ENCODE measurements at regions of chr18 and their contacts with region 1.

Region 1: DNA sequence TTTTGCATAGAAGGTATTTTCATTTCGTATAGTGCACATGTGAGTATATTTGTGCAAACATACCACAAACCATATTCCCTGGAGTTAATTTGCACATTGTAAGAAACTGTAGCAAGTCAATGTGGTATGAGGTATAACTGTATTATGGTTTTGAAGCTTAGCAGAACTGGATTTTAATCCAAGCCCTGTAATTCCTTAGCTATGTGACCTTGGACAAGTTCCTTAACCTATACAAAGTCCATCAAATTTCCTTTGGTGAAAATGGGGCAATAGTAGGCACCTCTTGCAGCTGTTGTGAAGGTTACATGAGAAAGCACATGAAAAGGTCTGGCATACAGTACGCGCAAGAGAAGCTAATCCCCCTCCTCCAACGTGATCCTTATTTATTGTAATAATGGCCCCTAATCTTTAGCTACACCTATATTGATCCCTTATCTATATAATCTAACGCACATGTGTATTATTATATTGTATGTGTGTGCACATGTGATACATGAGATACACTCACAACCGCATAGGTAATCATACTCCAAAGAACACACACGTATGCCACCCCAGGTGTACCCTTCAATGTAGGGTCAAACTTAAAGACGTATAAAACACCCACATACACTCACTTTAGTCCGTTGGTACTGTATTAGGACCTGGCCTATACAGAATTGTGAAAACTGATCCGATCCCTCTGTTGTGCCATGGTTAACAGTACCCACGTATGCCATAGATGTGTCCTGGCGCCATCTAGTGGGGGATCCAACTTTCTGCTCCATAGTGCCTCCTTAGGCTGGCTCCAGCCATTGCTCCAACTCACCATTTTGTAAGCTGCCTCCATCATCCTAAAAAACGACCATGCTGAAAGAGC is 402.9 kb upstream of the SLC14A2 start:
- DNase-seq: peak; percentile 89
- H3K4me3 Mint-ChIP-seq: no peak overlapping the region
- H3K27ac Mint-ChIP-seq: no peak overlapping the region
- H3K4me1 Mint-ChIP-seq: no peaks in the 10 kb centered on the region
- H3K27me3 Mint-ChIP-seq: no peaks in the 10 kb centered on the region
- CTCF ChIP-seq: peak; percentile 99

Region 2: GRCh38 chr18:43620936-43621335 is 1591.5 kb before region 1 on chr18:
- CTCF ChIA-PET with region 1: interaction called, 6 read pairs
- POLR2A ChIA-PET with region 1: no interaction called
- intact Hi-C with region 1: loop called (anchors 5 kb)
- DNase-seq: peak; percentile 54
- H3K4me3 Mint-ChIP-seq: no peak overlapping the region
- H3K27ac Mint-ChIP-seq: no peak overlapping the region
- H3K4me1 Mint-ChIP-seq: no peaks in the 10 kb centered on the region
- H3K27me3 Mint-ChIP-seq: peaks cover 34% of the 10 kb centered on the region
- CTCF ChIP-seq: peak; percentile 47

Region 3: GRCh38 chr18:44579028-44579702 is 633.2 kb before region 1 on chr18:
- CTCF ChIA-PET with region 1: interaction called, 3 read pairs
- POLR2A ChIA-PET with region 1: no interaction called
- intact Hi-C with region 1: loop called (anchors 1 kb)
- DNase-seq: peak; percentile 53
- H3K4me3 Mint-ChIP-seq: no peak overlapping the region
- H3K27ac Mint-ChIP-seq: no peak overlapping the region
- H3K4me1 Mint-ChIP-seq: peaks cover 13% of the 10 kb centered on the region
- H3K27me3 Mint-ChIP-seq: no peaks in the 10 kb centered on the region
- CTCF ChIP-seq: peak; percentile 59

Region 4: GRCh38 chr18:44838971-44839666 is 373.3 kb before region 1 on chr18:
- CTCF ChIA-PET with region 1: interaction called, 10 read pairs
- POLR2A ChIA-PET with region 1: no interaction called
- intact Hi-C with region 1: no loop called
- DNase-seq: peak; percentile 86
- H3K4me3 Mint-ChIP-seq: peak overlapping the region; percentile 17
- H3K27ac Mint-ChIP-seq: peak overlapping the region; percentile 75
- H3K4me1 Mint-ChIP-seq: peaks cover 17% of the 10 kb centered on the region
- H3K27me3 Mint-ChIP-seq: no peaks in the 10 kb centered on the region
- CTCF ChIP-seq: no peak

Region 5: DNA sequence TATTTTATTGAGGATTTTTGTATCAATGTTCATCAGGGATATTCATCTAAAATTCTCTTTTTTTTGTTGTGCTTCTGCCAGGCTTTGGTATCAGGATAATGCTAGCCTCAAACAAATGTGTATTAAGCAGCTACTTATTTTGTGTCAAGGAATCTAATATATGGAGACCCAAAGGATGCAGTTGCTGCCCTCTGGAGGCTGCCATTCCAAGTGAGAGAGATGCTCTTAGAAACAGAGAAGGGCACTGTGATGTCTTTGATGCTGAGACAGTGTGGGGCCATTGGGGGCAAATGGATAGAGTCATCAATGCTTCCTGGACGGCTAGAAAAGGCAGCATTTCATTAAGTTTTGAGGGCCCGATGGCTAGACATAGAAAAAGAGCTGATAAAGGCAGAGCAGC is 239.1 kb before region 1 on chr18:
- CTCF ChIA-PET with region 1: interaction called, 7 read pairs
- POLR2A ChIA-PET with region 1: no interaction called
- intact Hi-C with region 1: loop called (anchors 1 kb)
- DNase-seq: peak; percentile 22
- H3K4me3 Mint-ChIP-seq: no peak overlapping the region
- H3K27ac Mint-ChIP-seq: no peak overlapping the region
- H3K4me1 Mint-ChIP-seq: no peaks in the 10 kb centered on the region
- H3K27me3 Mint-ChIP-seq: no peaks in the 10 kb centered on the region
- CTCF ChIP-seq: no peak

Region 6: GRCh38 chr18:45191795-45192194 is 20.6 kb before region 1 on chr18:
- CTCF ChIA-PET with region 1: interaction called, 18 read pairs
- POLR2A ChIA-PET with region 1: no interaction called
- intact Hi-C with region 1: no loop called
- DNase-seq: no peak
- H3K4me3 Mint-ChIP-seq: no peak overlapping the region
- H3K27ac Mint-ChIP-seq: no peak overlapping the region
- H3K4me1 Mint-ChIP-seq: no peaks in the 10 kb centered on the region
- H3K27me3 Mint-ChIP-seq: no peaks in the 10 kb centered on the region
- CTCF ChIP-seq: no peak